ENCODE measurements at regions of chr16 and their contacts with region 1.

Region 1: GRCh38 chr16:85615852-85616606 is 2.9 kb downstream of the GSE1 start:
- DNase-seq: peak; percentile 86
- H3K4me3 Mint-ChIP-seq: no peak overlapping the region
- H3K27ac Mint-ChIP-seq: no peak overlapping the region
- H3K4me1 Mint-ChIP-seq: peaks cover 32% of the 10 kb centered on the region
- H3K27me3 Mint-ChIP-seq: peaks cover 23% of the 10 kb centered on the region

Region 2: DNA sequence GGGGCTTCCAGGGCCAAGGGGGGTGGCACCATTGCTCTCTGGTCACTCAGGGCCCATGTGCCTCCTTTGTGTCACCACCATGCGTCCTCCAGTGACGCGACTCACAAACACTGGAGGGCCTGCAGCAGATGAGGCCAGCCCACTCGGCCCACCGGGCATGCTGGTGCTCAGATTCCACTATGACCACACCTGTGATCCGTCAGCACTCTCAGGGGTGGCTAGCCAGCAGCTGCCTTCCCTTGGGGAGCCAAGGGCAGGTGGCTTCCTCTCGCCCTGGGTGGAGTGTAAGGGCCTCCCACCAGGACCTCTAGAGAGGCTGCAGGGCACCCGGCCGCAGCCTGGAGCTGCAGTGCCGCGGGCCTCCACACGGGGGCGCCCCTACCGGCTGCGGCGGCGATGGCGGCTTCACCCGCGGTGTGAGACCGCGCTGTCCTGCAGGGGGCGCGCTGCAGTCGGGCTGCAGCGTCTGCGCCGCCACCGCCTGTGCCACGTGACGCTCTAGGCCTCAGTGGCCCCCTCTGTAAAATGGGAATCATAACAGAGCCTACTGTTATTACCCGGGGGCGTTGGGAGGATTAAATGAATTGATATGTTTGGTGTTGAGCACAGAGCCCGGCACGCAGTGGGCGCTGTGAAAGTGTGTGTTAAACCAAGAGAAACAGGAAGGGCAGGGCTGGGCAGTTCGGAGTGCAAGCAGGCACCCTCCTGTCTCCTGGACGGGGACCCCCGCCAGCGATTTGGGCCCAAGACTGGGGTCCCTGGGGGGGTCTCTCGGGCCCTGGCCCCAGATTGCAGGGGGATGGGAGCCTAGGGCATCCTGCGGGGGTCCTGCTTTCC is 195.3 kb before region 1 on chr16:
- CTCF ChIA-PET with region 1: interaction called, 55 read pairs
- intact Hi-C with region 1: no loop called
- DNase-seq: peak; percentile 71
- H3K4me3 Mint-ChIP-seq: no peak overlapping the region
- H3K27ac Mint-ChIP-seq: no peak overlapping the region
- H3K4me1 Mint-ChIP-seq: peaks cover 4% of the 10 kb centered on the region
- H3K27me3 Mint-ChIP-seq: no peaks in the 10 kb centered on the region

Region 3: DNA sequence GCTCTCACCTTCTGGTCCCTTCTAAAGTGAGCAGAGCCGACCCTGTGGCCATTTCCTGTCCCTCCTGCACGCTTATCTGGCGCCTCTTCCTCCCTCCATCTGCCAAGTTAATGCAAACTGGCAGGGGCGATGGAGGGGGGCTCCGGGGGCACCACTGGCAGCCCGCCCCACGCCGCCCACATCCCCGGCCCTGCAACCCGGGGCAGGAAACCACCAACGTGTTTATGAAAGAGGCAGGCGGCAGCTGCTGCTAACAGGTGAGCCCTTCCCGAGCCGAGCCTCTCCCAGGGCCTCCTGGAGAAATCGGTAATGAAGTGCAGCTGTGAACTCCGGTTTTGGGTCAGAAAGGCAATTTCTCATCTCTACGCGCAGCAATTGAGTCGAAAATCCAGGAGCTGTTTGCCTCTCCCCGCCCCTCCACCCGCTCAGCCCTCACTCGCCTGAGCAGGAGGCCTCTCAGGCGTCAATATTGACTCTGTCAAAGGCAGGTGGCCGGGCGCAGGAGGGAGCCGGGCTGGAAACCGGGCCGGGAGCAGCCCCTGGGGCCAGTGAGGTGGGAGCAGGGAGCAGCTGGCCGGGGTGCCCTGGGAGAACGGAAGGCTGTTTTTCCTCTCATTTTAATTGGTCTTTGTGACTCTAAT is 167.4 kb before region 1 on chr16:
- CTCF ChIA-PET with region 1: interaction called, 16 read pairs
- intact Hi-C with region 1: no loop called
- DNase-seq: peak; percentile 55
- H3K4me3 Mint-ChIP-seq: no peak overlapping the region
- H3K27ac Mint-ChIP-seq: no peak overlapping the region
- H3K4me1 Mint-ChIP-seq: peaks cover 42% of the 10 kb centered on the region
- H3K27me3 Mint-ChIP-seq: no peaks in the 10 kb centered on the region

Region 4: GRCh38 chr16:85491058-85491771 is 124.8 kb before region 1 on chr16:
- CTCF ChIA-PET with region 1: interaction called, 21 read pairs
- intact Hi-C with region 1: no loop called
- DNase-seq: peak; percentile 56
- H3K4me3 Mint-ChIP-seq: no peak overlapping the region
- H3K27ac Mint-ChIP-seq: no peak overlapping the region
- H3K4me1 Mint-ChIP-seq: peaks cover 4% of the 10 kb centered on the region
- H3K27me3 Mint-ChIP-seq: no peaks in the 10 kb centered on the region

Region 5: GRCh38 chr16:85554112-85554813 is 61.8 kb before region 1 on chr16:
- CTCF ChIA-PET with region 1: interaction called, 29 read pairs
- intact Hi-C with region 1: no loop called
- DNase-seq: peak; percentile 93
- H3K4me3 Mint-ChIP-seq: peak overlapping the region; percentile 79
- H3K27ac Mint-ChIP-seq: peak overlapping the region; percentile 93
- H3K4me1 Mint-ChIP-seq: peaks cover 42% of the 10 kb centered on the region
- H3K27me3 Mint-ChIP-seq: no peaks in the 10 kb centered on the region

Region 6: DNA sequence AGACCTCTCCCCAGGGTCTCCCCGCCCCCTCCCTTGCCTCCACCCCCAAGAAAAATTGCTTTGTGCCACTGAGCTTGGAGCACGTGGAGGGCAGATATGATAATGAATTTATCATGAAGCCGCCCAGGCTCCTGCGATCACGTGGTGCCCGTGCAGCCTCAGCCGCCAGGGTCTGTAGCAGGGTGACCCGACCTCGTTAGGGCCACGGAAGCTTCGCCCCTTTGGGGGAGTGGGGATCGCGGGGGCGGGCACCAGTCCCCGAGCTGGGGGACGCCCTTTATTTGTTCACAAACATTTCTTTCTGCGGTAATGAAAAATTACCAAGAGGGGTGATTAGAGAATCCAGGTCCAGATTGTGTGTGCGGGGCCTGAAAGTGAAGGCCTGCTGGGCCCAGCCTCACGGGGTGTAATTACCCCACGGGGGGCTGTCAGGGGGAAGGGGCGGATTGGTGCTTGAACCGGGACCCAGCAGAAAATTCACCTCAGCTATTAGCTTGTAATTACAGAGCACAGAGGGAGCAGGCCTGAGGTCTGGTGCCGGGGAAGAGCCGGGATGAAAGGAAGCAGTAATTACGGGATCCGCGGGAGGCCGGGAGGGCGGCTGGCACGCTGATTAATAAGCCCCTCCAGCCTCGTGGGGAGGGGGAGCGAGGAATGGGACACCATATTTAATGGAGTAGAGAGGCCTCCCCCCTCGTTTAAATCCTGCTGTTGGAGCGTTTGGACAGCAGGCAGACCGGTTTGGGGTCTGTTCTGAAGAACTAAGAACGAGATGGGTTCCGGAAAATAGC is 10.4 kb after region 1 on chr16:
- CTCF ChIA-PET with region 1: interaction called, 30 read pairs
- intact Hi-C with region 1: no loop called
- DNase-seq: no peak
- H3K4me3 Mint-ChIP-seq: no peak overlapping the region
- H3K27ac Mint-ChIP-seq: no peak overlapping the region
- H3K4me1 Mint-ChIP-seq: peaks cover 5% of the 10 kb centered on the region
- H3K27me3 Mint-ChIP-seq: no peaks in the 10 kb centered on the region

Region 7: DNA sequence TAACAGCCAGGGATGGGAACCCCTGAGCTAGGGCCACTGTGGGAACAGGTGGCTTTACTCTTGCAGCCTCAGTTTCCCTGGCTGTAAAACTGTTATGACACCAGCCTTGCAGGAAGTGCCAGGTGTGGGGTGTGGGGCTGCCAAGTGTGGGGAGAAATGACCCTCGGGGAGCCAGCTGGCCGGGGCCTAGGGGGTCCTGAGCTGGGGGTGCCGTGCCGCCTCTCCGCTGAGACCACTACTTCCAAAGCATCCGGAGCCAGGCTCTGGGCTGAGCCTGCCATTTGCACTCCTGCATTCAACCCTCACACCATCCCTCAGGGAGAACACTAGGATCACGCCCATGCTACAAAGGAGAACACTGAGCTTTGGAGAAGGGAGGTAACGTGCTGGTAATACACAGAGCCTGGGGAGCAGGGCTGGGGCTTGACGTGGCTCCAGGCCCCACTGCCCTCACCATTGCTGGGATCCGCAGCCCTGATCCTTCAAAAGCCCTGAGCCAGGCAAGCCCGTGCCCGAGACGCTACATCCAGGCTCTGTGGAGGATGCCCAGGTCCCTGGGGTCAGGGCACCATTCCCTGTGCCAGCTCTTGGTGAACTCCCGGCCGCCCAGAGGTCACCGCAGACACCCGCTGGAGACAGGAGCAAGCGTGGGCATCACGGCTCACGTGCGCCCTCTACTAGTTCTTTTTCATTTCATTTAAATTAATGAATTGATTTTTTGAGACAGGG is 101.5 kb after region 1 on chr16:
- CTCF ChIA-PET with region 1: interaction called, 4 read pairs
- intact Hi-C with region 1: loop called (anchors 1 kb)
- DNase-seq: peak; percentile 79
- H3K4me3 Mint-ChIP-seq: no peak overlapping the region
- H3K27ac Mint-ChIP-seq: no peak overlapping the region
- H3K4me1 Mint-ChIP-seq: peaks cover 11% of the 10 kb centered on the region
- H3K27me3 Mint-ChIP-seq: peaks cover 5% of the 10 kb centered on the region